ENCODE measurements at regions of chr2 and their contacts with region 1.

Region 1: DNA sequence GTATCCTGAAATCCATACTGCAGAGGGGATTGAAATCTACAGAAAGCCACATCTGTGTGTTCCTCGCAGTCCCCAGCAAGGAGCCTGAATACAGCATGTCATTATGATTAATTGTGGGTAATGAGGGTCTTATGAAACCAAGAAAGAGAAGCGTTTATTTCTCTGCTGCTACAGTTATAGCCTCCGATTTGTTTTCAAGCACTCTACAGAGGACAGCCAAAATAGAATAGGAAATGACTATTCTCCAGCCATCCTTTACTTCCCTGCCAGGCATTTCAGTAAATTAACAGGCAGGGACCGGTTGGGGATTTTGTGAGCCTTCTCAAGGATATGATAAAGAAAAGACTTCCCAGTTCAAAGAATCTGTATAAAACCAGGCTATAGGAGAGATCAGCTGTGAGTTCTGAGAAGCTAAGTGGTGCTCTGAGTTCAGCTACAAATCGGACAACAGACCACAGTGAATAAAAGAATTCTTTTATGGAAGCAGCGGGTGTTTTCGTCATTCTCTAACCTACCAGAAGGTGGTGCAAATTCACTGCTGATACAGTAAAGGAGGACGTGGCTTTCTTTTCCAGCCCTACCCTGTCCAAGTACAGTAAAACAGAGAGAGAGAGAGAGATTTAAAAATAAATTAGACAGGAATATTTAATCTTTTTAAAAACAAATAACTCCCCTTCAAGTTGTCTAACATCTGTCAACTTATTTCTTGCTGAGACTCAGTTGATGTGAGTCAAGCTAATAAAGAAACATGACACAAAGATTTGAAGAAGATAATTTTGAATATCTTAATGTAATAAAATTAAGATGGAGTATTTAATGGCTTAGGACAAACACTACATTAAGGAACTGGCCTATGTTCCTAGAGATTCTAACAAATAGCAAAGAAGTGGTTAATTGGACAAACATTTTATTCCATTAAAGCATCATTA is 133.7 kb downstream of the INSIG2 start:
- DNase-seq: peak; percentile 40
- H3K4me3 Mint-ChIP-seq: no peak overlapping the region
- H3K27ac Mint-ChIP-seq: no peak overlapping the region
- H3K4me1 Mint-ChIP-seq: peaks cover 40% of the 10 kb centered on the region
- H3K27me3 Mint-ChIP-seq: peaks cover 54% of the 10 kb centered on the region

Region 2: DNA sequence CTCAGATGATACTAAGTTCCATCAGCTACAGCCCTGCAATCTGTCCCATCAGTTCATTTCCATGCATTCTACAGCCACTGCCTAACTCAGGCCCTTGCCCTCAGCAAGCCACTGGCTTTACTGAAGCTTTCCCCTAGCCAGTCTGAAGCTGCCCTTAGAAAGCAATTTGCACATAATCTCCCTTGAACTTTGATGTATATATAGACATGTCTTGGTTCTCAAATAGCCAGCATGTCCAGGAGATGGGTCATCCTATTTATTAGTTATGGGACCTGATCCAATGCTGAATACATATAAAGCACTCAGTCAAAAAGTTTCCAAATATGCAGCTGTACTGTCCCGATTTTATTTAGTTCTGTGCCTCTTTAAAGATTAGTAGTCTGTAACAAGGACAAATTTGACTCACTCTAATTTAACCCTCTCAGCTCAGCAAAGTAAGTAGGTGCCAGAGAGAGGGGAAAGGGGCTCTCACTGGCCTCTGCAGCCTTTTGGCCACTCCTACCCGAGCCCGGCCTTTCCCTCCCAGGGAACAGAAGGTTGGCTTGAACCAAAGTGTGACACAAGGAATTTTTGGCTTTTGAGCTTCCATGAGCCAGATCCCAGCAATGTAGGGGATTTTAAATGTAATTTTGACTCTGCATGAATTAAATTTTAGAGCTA is 278.8 kb before region 1 on chr2:
- intact Hi-C with region 1: no loop called
- DNase-seq: no peak
- H3K4me3 Mint-ChIP-seq: no peak overlapping the region
- H3K27ac Mint-ChIP-seq: no peak overlapping the region
- H3K4me1 Mint-ChIP-seq: no peaks in the 10 kb centered on the region
- H3K27me3 Mint-ChIP-seq: no peaks in the 10 kb centered on the region

Region 3: GRCh38 chr2:118186110-118186857 is 35.6 kb before region 1 on chr2:
- intact Hi-C with region 1: no loop called
- DNase-seq: peak; percentile 83
- H3K4me3 Mint-ChIP-seq: peak overlapping the region; percentile 90
- H3K27ac Mint-ChIP-seq: peak overlapping the region; percentile 98
- H3K4me1 Mint-ChIP-seq: peaks cover 53% of the 10 kb centered on the region
- H3K27me3 Mint-ChIP-seq: no peaks in the 10 kb centered on the region

Region 4: DNA sequence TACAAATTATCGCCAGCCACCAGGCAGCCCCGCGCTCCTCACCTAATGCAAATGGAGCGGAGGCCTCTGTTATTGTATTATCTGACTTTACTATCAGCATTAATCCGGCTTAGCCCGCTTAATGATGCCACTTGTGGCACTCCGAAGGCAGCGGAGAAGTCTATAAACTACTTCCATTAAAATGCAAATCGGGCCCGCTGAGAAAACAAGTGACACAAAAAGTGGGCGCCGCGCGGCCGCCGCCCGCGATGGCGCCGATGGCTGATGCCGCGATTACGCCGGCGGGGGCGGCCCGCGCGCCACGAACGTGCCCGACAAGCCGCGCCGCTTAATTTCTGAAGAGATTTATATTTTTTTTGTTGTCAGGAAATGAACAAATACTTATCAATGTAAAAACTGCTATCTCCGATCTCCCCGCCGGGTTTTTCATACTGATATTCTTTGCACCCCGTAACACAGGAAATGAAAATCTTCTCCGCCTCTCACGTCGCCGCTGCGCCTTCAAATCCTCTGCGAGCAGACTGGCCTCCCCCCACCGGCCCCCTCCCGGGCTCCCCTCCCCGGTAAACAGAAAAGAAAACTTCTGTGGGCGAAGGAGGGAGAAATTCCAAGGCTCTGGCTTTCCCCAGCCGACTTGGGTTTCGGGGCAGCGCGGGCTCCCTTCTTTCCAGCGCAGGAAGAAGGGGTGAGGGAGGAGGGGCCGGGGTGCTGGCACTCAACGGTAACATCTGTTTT is 88.2 kb after region 1 on chr2:
- intact Hi-C with region 1: loop called (anchors 1 kb)
- DNase-seq: peak; percentile 55
- H3K4me3 Mint-ChIP-seq: peak overlapping the region; percentile 83
- H3K27ac Mint-ChIP-seq: peak overlapping the region; percentile 89
- H3K4me1 Mint-ChIP-seq: no peaks in the 10 kb centered on the region
- H3K27me3 Mint-ChIP-seq: peaks cover 25% of the 10 kb centered on the region

Region 5: DNA sequence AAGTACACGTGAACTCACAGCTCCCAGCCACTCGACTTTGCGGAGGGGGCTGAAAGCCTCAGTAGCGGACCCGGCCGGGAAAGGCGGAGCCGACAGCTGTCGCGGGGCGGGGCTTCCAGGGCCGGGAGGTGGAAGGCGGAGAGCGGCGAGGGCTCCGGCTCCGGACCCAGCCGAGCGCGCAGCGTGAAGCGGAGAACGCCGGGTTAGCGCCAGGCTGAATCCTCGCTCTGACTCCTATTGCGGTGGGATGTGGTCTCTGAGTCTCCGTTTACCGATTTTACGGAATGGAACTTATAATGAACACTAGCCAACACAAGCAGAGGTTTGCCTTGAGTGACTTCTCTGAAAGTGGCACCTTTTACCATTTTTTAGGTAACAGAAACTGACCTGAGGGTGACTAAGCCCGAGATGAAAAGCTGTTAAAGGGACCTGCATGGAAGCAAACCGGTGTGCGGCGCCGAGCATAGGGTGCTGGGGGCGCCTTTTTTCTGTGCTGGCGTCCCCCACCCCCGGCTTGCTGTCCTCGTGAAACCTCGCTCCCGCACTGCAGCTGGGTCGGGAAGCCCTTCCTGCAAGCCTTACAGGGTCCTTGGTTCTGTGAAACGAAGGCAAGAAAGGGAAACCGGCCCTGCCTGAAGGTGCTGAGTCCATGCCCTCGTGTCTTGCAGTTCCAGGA is 552.7 kb after region 1 on chr2:
- intact Hi-C with region 1: loop called (anchors 1 kb)
- DNase-seq: no peak
- H3K4me3 Mint-ChIP-seq: peak overlapping the region; percentile 56
- H3K27ac Mint-ChIP-seq: no peak overlapping the region
- H3K4me1 Mint-ChIP-seq: no peaks in the 10 kb centered on the region
- H3K27me3 Mint-ChIP-seq: peaks cover 14% of the 10 kb centered on the region

Region 6: DNA sequence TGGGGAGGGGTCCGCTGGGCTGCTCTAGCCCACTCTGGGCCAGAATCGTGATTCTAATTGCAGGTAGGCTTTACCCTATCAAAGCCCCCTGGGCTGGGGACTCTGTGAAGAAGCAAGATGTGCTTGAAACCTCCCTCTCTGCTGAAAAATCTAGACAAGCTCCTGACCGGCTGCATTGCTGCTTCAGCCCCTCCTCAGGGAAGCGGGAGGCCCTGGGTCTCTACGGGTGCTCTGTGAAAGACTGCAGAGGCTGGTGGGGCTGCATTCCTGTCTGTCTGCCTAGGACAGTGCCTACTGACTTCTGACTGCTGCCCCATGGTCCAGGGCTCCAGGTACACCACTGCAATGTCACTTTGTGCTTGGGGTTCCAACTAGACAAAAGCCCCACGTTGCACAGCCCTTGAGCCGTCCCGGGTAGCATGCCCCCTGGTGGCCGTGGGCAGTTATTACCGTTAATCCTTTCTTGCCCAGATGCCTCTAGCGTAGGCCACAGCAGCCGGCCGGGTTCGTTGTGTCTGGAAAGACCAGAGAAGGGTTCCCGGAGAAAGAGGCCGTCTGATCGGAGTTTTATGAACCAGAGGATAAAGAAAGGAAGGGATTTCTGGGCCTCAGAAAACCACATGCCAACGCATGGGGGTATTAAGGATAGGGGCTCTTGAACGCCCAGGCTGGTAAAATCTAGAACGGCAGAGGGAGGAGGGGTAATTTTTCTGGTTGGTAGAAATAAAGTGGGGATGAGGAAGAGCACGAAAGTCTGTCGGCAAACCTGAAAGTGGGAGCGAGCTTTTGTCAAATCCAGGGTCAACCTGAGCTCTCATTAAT is 952.5 kb after region 1 on chr2:
- intact Hi-C with region 1: loop called (anchors 2 kb)
- DNase-seq: peak; percentile 8
- H3K4me3 Mint-ChIP-seq: no peak overlapping the region
- H3K27ac Mint-ChIP-seq: no peak overlapping the region
- H3K4me1 Mint-ChIP-seq: no peaks in the 10 kb centered on the region
- H3K27me3 Mint-ChIP-seq: no peaks in the 10 kb centered on the region

Measured in activated T-helper 1 cell treated with anti-CD3 and anti-CD28 coated beads, Interleukin-12 subunit alpha, Interleukin-12 subunit beta, Interleukin-2, Interleukin-4 antibody, amounts not matched to agents 30 ng/mL and 10 ng/mL and 1 ng/mL, durations not matched to agents 14 hours and 24 hours and 36 hours (primary cell).